Transverse colon (tissue), 4 donors: ENCODE measurements at regions of chr10 and their contacts with region 1.

Region 1: DNA sequence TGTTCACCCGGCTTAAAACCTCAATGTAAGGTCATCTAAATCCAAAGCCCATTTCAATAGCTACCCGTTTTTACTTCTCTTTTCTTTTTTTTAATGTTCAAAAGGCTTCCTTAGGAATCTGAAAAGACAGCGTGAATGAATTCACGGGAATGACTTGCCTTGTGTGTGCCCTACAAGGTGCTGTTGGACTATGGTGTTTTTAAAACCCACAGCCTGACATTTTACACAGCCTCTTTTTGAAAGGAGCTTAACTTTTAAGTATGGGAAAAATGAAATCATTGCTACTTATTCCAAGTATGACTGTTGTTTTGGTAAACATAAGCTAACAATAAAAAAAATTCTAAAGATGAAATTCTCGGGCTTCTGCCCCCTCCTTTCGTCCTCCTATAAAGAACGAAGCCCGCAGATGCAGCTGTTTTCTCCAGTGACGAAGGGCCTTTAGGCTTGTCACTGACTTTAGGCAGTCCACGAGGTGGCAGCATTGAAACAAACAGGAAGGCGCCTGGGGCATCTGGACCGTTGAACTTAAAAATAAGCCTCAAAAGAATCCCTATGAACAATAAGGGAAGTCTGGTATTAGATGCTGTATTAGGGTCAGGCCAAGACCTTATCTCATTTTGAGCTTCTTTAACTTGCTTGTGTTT is 141.3 kb downstream of the NRP1 start:
- DNase-seq: peak; percentile 81
- H3K4me3 ChIP-seq: no peak overlapping the region
- H3K27ac ChIP-seq: peak overlapping the region in 3 of 4 donors; percentile 32 to 38 (median 32)
- H3K4me1 ChIP-seq: peaks cover 0 to 37% (median 14%) of the 10 kb centered on the region in 4 donors
- H3K27me3 ChIP-seq: no peaks in the 10 kb centered on the region
- CTCF ChIP-seq: peak; percentile 72 to 80 (median 75)
- EP300 ChIP-seq: no peak
- POLR2A ChIP-seq: no peak

Region 2: GRCh38 chr10:33132626-33133025 is 60.6 kb before region 1 on chr10:
- in situ Hi-C with region 1: no loop called
- intact Hi-C with region 1: no loop called
- DNase-seq: no peak
- H3K4me3 ChIP-seq: no peak overlapping the region
- H3K27ac ChIP-seq: no peak overlapping the region
- H3K4me1 ChIP-seq: peaks cover 0 to 11% (median 6%) of the 10 kb centered on the region in 4 donors
- H3K27me3 ChIP-seq: no peaks in the 10 kb centered on the region
- CTCF ChIP-seq: no peak
- EP300 ChIP-seq: no peak
- POLR2A ChIP-seq: no peak

Region 3: DNA sequence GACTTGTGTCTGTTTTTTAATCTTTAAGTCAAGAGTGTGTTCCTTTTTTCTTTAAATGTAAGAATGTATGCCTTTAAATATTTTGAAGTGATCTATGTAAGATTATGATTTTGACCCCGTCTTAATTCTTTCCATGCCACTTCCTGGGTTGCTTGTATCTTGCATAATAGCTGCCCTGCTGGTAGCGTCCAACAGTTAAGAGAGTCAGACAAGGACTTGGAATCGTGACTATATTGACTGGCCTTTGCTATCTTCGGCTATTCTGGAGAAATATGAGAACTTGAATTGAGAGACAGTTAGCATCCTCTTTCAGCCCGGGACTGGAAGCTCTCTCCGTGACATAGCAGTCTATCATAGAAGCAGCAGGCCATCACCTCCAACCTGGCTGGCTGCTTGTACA is 128.3 kb after region 1 on chr10:
- in situ Hi-C with region 1: loop called in 2 of 4 experiments (anchors 10 kb)
- intact Hi-C with region 1: loop called (anchors 5 kb)
- DNase-seq: no peak
- H3K4me3 ChIP-seq: no peak overlapping the region
- H3K27ac ChIP-seq: no peak overlapping the region
- H3K4me1 ChIP-seq: peaks cover 0 to 5% (median 0%) of the 10 kb centered on the region in 4 donors
- H3K27me3 ChIP-seq: no peaks in the 10 kb centered on the region
- CTCF ChIP-seq: no peak
- EP300 ChIP-seq: no peak
- POLR2A ChIP-seq: no peak

Region 4: DNA sequence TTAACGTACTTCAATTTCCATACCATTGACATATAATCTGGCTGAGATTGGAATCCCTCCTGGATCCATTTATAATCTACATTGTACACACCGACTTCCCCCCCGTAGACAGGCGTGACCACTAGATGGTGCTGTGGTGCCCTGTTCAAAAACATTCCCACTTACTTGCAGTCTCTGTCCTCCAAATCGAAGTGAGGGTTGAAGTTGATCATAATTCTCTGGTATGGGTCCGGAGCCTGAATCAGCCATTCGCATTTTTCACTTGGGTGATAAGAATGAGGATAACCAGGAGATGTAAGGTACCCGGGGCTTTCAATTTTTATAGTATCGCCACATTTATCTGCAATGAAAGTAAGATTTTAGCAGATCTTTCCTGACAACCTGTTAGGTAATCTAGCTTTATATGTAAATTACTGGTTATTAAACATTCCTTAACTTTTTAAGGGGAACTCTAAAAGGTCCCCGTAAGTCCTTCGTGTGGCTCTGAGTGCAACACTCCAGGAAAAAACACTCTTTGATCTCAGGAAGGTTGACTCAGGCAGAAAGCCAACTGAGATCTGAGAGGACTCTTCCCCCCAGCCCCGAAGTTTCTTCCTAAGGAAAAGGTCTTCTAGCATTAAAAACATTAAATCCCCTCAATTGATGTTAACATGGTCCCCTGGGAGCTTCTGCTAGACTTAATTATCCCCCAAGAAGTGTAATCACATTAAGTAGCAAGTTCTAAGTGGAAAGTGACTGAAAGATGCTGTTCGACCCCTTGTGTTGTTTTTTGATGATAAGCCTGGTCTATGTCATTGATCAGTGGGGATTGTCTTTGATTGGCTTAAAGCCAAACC is 137.6 kb after region 1 on chr10:
- in situ Hi-C with region 1: loop called in 2 of 4 experiments (anchors 10 kb)
- intact Hi-C with region 1: no loop called
- DNase-seq: peak; percentile 87
- H3K4me3 ChIP-seq: peak overlapping the region in 2 of 4 donors; percentile 51 to 60
- H3K27ac ChIP-seq: peak overlapping the region; percentile 22 to 90 (median 57)
- H3K4me1 ChIP-seq: peaks cover 0 to 17% (median 7%) of the 10 kb centered on the region in 4 donors
- H3K27me3 ChIP-seq: no peaks in the 10 kb centered on the region
- CTCF ChIP-seq: peak; percentile 82 to 90 (median 87)
- EP300 ChIP-seq: no peak
- POLR2A ChIP-seq: no peak

Region 5: DNA sequence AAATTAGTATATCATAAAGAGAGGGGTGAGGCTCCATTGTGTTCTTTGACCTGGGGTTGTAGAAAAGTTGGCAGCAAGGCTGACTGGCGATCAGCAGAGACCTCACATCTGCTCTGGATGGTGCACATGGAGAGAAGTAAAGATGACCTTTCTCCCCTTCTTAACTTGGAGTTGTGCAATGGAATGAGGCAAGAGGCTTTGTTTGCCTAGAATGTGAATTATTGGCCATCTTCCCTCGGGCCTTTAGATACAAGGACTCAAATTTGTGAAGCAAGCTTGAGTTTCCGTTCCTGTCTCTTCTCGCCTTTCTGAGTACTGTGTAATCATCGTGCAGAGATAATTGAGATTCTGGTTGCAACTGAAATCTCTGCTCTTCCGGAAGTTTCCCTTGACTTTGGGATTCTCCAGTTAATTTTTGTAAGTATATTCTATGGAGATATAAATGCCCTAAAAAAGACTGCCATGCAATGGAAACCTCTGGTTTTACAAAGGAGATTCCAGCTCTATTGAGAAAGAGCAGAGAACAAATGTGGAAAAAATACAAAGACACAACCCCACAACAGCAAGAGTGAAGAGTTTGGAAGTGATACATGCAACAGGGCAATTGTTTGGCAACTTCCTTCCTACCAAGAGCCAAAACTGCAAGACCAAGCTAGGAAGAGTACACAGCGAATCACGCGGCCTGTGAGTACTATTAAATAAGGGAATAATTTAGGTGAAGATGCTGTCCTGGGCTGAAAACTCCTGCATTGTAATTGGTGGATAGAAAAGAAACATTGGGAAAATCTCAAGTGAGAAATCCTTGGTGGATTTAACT is 683.6 kb after region 1 on chr10:
- in situ Hi-C with region 1: no loop called
- intact Hi-C with region 1: no loop called
- DNase-seq: peak; percentile 64
- H3K4me3 ChIP-seq: no peak overlapping the region
- H3K27ac ChIP-seq: peak overlapping the region; percentile 18 to 53 (median 46)
- H3K4me1 ChIP-seq: peaks cover 4 to 11% (median 5%) of the 10 kb centered on the region in 4 donors
- H3K27me3 ChIP-seq: no peaks in the 10 kb centered on the region
- CTCF ChIP-seq: no peak
- EP300 ChIP-seq: no peak
- POLR2A ChIP-seq: no peak

Region 6: DNA sequence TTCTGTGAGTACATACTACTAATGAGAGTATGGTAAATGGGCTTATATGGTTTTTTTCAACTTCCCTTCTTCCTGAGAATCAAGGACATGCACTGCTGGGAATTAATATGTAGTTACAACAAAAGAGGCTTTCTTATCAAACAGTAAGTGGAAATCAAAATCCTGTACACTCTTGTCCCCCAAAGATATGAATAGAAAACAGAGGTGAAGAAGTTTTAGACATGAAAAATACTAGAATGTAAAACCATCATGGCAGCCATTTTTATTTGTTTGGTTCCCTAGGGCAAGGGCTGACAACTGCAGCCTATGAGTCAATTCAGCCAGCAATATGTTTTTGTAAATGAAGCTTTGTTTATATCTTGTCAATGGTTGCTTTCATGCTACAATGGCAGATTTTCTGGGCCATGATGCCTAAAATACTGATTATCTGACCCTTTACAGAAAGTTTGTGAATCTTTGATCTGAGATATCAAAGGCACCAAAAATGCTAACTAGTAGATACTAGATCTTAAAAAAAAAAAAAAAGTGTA is 1199.5 kb after region 1 on chr10:
- in situ Hi-C with region 1: no loop called
- intact Hi-C with region 1: no loop called
- DNase-seq: no peak
- H3K4me3 ChIP-seq: no peak overlapping the region
- H3K27ac ChIP-seq: no peak overlapping the region
- H3K4me1 ChIP-seq: no peaks in the 10 kb centered on the region
- H3K27me3 ChIP-seq: no peaks in the 10 kb centered on the region
- CTCF ChIP-seq: no peak
- EP300 ChIP-seq: no peak
- POLR2A ChIP-seq: no peak